Transverse colon (tissue), 4 donors: ENCODE measurements at regions of chr6 and their contacts with region 1.

Region 1: GRCh38 chr6:26172496-26172958 is 85.3 kb downstream of the HFE start:
- DNase-seq: peak; percentile 49
- H3K4me3 ChIP-seq: peak overlapping the region; percentile 58 to 73 (median 66)
- H3K27ac ChIP-seq: peak overlapping the region; percentile 95 to 99 (median 98)
- H3K4me1 ChIP-seq: peaks cover 4 to 27% (median 9%) of the 10 kb centered on the region in 4 donors
- H3K27me3 ChIP-seq: no peaks in the 10 kb centered on the region
- CTCF ChIP-seq: peak in 1 of 5 experiments; percentile 11
- EP300 ChIP-seq: no peak
- POLR2A ChIP-seq: no peak

Region 2: DNA sequence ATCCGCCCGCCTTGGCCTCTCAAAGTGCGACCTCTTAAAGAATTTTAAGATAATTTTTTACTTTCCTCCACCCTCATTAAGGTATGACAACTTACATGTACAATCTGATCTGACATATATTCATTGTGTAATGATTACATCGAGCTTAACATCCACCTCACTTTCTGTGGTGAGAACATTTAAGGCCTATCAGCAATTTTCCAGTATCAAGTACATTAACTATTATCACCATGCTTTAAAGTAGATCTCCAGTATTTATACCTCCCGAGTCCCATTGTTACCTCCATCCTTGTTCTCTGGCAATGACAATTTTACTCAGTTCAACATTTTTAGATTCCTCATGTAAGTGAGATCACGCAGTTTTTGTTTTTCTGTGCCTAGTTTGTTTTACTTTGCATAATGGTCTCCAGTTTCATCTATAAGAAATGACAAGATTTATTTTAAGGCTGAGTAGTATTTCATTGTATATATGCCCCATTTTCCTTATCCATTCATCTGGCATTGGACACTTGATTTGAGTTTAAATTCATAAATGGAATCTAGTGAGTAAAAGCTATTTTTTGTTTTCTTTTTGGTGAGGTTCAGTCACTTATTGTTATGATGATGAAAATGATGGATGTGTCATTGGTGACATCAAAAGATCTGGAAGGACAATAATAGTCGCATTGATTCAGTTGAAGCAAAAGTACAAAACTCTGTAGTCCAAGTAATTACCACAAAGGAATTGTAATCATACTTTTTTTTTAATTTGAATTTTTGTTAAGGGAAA is 1652.7 kb after region 1 on chr6:
- in situ Hi-C with region 1: no loop called
- intact Hi-C with region 1: loop called (anchors 5 kb)
- DNase-seq: no peak
- H3K4me3 ChIP-seq: peak overlapping the region in 3 of 4 donors; percentile 44 to 65 (median 57)
- H3K27ac ChIP-seq: peak overlapping the region; percentile 83 to 95 (median 91)
- H3K4me1 ChIP-seq: peaks cover 0 to 20% (median 6%) of the 10 kb centered on the region in 4 donors
- H3K27me3 ChIP-seq: no peaks in the 10 kb centered on the region
- CTCF ChIP-seq: no peak
- EP300 ChIP-seq: no peak
- POLR2A ChIP-seq: no peak